Naive thymus-derived CD4-positive, alpha-beta T cell (primary cell): ENCODE measurements at regions of chr15 and their contacts with region 1.

Region 1: GRCh38 chr15:65184868-65185738 is at the start of gene CLPX:
- DNase-seq: peak; percentile 80 to 97 (median 95)
- ATAC-seq: peak; percentile 97
- H3K4me3 ChIP-seq: peak within 1 kb of the TSS; percentile 85
- H3K4me3 Mint-ChIP-seq: peak within 1 kb of the TSS; percentile 89 to 96 (median 94)
- H3K27ac ChIP-seq: peak within 1 kb of the TSS; percentile 93
- H3K27ac Mint-ChIP-seq: peak within 1 kb of the TSS; percentile 87 to 98 (median 96)
- H3K4me1 ChIP-seq: peaks cover 4% of the 10 kb centered on the region in 2 donors
- H3K4me1 Mint-ChIP-seq: peaks cover 14 to 40% (median 31%) of the 10 kb centered on the region in 7 donors
- H3K27me3 ChIP-seq: no peaks in the 10 kb centered on the region
- H3K27me3 Mint-ChIP-seq: no peaks in the 10 kb centered on the region
- total RNA-seq, gene CLPX: 33.4 to 56.3 (median 51.1) TPM

Region 2: GRCh38 chr15:63277038-63277892 is 1907.8 kb before region 1 on chr15 and contains the start of gene APH1B:
- CTCF ChIA-PET with region 1: no interaction called
- POLR2A ChIA-PET with region 1: no interaction called
- intact Hi-C with region 1: loop called in 1 of 2 experiments (anchors 10 kb)
- DNase-seq: peak; percentile 62 to 80 (median 74)
- ATAC-seq: peak; percentile 92
- H3K4me3 ChIP-seq: peak within 1 kb of the TSS; percentile 71
- H3K4me3 Mint-ChIP-seq: peak within 1 kb of the TSS; percentile 78 to 93 (median 89)
- H3K27ac ChIP-seq: peak within 1 kb of the TSS; percentile 96
- H3K27ac Mint-ChIP-seq: peak within 1 kb of the TSS; percentile 75 to 98 (median 86)
- H3K4me1 ChIP-seq: peaks cover 10 to 21% of the 10 kb centered on the region in 2 donors
- H3K4me1 Mint-ChIP-seq: peaks cover 23 to 49% (median 46%) of the 10 kb centered on the region in 7 donors
- H3K27me3 ChIP-seq: no peaks in the 10 kb centered on the region
- H3K27me3 Mint-ChIP-seq: no peaks in the 10 kb centered on the region
- total RNA-seq, gene APH1B: 9.9 to 29.9 (median 17.6) TPM

Region 3: GRCh38 chr15:64387562-64388168 is 797.4 kb before region 1 on chr15 and contains the start of gene TRIP4:
- CTCF ChIA-PET with region 1: no interaction called
- POLR2A ChIA-PET with region 1: no interaction called
- intact Hi-C with region 1: loop called in 1 of 2 experiments (anchors 2 kb)
- DNase-seq: peak; percentile 90 to 97 (median 96)
- ATAC-seq: peak; percentile 100
- H3K4me3 ChIP-seq: peak within 1 kb of the TSS; percentile 97
- H3K4me3 Mint-ChIP-seq: peak within 1 kb of the TSS; percentile 95 to 99 (median 97)
- H3K27ac ChIP-seq: peak within 1 kb of the TSS; percentile 64
- H3K27ac Mint-ChIP-seq: peak within 1 kb of the TSS; percentile 84 to 99 (median 92)
- H3K4me1 ChIP-seq: peaks cover 8 to 10% of the 10 kb centered on the region in 2 donors
- H3K4me1 Mint-ChIP-seq: peaks cover 17 to 24% (median 19%) of the 10 kb centered on the region in 7 donors
- H3K27me3 ChIP-seq: no peaks in the 10 kb centered on the region
- H3K27me3 Mint-ChIP-seq: no peaks in the 10 kb centered on the region
- total RNA-seq, gene TRIP4: 16.5 to 29.3 (median 25.4) TPM

Region 4: DNA sequence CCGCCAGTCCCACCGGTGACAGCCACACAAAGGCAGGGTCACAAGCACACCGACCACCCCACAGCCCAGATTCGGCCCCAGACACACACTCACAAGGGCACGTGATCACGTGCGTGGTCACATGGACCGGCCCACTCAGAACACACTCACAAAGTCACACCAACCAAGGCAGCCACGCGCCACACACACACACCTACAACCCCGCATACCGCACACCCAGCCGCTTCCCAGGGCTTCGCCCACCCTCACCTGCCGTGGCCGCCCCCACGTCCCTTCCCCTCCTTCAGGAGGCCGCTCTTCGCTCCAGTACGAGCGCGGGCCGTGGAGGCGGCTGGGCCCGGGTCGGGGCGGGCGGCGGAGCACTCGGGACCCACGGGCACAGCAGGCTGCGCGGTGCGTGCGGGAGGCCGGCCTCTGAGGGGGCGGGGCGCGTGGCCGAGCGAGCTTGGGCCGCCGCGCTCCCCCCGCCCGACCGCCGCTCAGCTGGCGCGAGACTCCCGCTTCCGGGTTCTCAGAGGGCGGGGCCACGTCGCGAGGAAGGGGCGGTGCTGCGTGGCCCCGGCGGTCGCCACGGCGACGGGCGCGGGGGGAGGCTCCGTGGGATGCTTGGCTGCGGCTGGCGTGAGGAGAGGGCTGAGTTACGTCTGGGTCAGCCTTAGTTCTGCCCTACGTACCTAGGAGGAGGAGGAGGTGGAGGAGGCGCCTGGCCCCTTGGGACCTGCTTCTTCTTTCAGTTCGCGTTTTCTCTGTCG is 195.5 kb before region 1 on chr15 and contains the start of gene SPG21:
- CTCF ChIA-PET with region 1: no interaction called
- POLR2A ChIA-PET with region 1: interaction called, 3 read pairs
- intact Hi-C with region 1: loop called (anchors 1 kb)
- DNase-seq: peak; percentile 77 to 97 (median 85)
- ATAC-seq: peak; percentile 95
- H3K4me3 ChIP-seq: peak within 1 kb of the TSS; percentile 83
- H3K4me3 Mint-ChIP-seq: peak within 1 kb of the TSS; percentile 93 to 99 (median 97)
- H3K27ac ChIP-seq: peak within 1 kb of the TSS; percentile 76
- H3K27ac Mint-ChIP-seq: peak within 1 kb of the TSS; percentile 91 to 98 (median 94)
- H3K4me1 ChIP-seq: peaks cover 0 to 19% of the 10 kb centered on the region in 2 donors
- H3K4me1 Mint-ChIP-seq: peaks cover 33 to 55% (median 48%) of the 10 kb centered on the region in 7 donors
- H3K27me3 ChIP-seq: no peaks in the 10 kb centered on the region
- H3K27me3 Mint-ChIP-seq: no peaks in the 10 kb centered on the region
- total RNA-seq, gene SPG21: 42.5 to 72.3 (median 60.0) TPM

Region 5: GRCh38 chr15:65133548-65134200 is 51.4 kb before region 1 on chr15 and contains the start of gene PDCD7:
- CTCF ChIA-PET with region 1: no interaction called
- POLR2A ChIA-PET with region 1: interaction called, 7 read pairs
- intact Hi-C with region 1: loop called (anchors 1 kb)
- DNase-seq: peak; percentile 52 to 89 (median 81)
- ATAC-seq: peak; percentile 95
- H3K4me3 ChIP-seq: peak within 1 kb of the TSS; percentile 81
- H3K4me3 Mint-ChIP-seq: peak within 1 kb of the TSS; percentile 88 to 100 (median 92)
- H3K27ac ChIP-seq: peak within 1 kb of the TSS; percentile 94
- H3K27ac Mint-ChIP-seq: peak within 1 kb of the TSS; percentile 90 to 98 (median 96)
- H3K4me1 ChIP-seq: peaks cover 6 to 14% of the 10 kb centered on the region in 2 donors
- H3K4me1 Mint-ChIP-seq: peaks cover 20 to 43% (median 35%) of the 10 kb centered on the region in 7 donors
- H3K27me3 ChIP-seq: no peaks in the 10 kb centered on the region
- H3K27me3 Mint-ChIP-seq: peaks cover 0 to 2% (median 0%) of the 10 kb centered on the region in 5 donors
- total RNA-seq, gene PDCD7: 23.0 to 38.6 (median 36.9) TPM

Region 6: GRCh38 chr15:65304389-65305144 is 119.5 kb after region 1 on chr15 and contains the start of gene RNU5B-1:
- CTCF ChIA-PET with region 1: interaction called, 3 read pairs
- POLR2A ChIA-PET with region 1: interaction called, 16 read pairs
- intact Hi-C with region 1: loop called (anchors 1 kb)
- DNase-seq: peak; percentile 40 to 94 (median 88)
- ATAC-seq: peak; percentile 89
- H3K4me3 ChIP-seq: peak within 1 kb of the TSS; percentile 60
- H3K4me3 Mint-ChIP-seq: peak within 1 kb of the TSS; percentile 91 to 99 (median 97)
- H3K27ac ChIP-seq: peak within 1 kb of the TSS; percentile 83
- H3K27ac Mint-ChIP-seq: peak within 1 kb of the TSS; percentile 96 to 100 (median 99)
- H3K4me1 ChIP-seq: peaks cover 0 to 9% of the 10 kb centered on the region in 2 donors
- H3K4me1 Mint-ChIP-seq: peaks cover 4 to 35% (median 31%) of the 10 kb centered on the region in 7 donors
- H3K27me3 ChIP-seq: no peaks in the 10 kb centered on the region
- H3K27me3 Mint-ChIP-seq: peaks cover 0 to 11% (median 0%) of the 10 kb centered on the region in 5 donors
- total RNA-seq, gene RNU5B-1: 18.9 TPM in 1 of 5 experiments, not detected in the others

Region 7: GRCh38 chr15:65516997-65517865 is 332.1 kb after region 1 on chr15 and contains the start of gene DPP8:
- CTCF ChIA-PET with region 1: no interaction called
- POLR2A ChIA-PET with region 1: no interaction called
- intact Hi-C with region 1: loop called in 1 of 2 experiments (anchors 1 kb)
- DNase-seq: peak; percentile 88 to 96 (median 92)
- ATAC-seq: peak; percentile 98
- H3K4me3 ChIP-seq: peak within 1 kb of the TSS; percentile 75
- H3K4me3 Mint-ChIP-seq: peak within 1 kb of the TSS; percentile 93 to 100 (median 96)
- H3K27ac ChIP-seq: peak within 1 kb of the TSS; percentile 83
- H3K27ac Mint-ChIP-seq: peak within 1 kb of the TSS; percentile 86 to 99 (median 94)
- H3K4me1 ChIP-seq: peaks cover 22 to 25% of the 10 kb centered on the region in 2 donors
- H3K4me1 Mint-ChIP-seq: peaks cover 30 to 51% (median 44%) of the 10 kb centered on the region in 7 donors
- H3K27me3 ChIP-seq: no peaks in the 10 kb centered on the region
- H3K27me3 Mint-ChIP-seq: no peaks in the 10 kb centered on the region
- total RNA-seq, gene DPP8: 38.4 to 54.6 (median 40.8) TPM